Endothelial cell of umbilical vein (primary cell): ENCODE measurements at regions of chr22 and their contacts with region 1.

Region 1: DNA sequence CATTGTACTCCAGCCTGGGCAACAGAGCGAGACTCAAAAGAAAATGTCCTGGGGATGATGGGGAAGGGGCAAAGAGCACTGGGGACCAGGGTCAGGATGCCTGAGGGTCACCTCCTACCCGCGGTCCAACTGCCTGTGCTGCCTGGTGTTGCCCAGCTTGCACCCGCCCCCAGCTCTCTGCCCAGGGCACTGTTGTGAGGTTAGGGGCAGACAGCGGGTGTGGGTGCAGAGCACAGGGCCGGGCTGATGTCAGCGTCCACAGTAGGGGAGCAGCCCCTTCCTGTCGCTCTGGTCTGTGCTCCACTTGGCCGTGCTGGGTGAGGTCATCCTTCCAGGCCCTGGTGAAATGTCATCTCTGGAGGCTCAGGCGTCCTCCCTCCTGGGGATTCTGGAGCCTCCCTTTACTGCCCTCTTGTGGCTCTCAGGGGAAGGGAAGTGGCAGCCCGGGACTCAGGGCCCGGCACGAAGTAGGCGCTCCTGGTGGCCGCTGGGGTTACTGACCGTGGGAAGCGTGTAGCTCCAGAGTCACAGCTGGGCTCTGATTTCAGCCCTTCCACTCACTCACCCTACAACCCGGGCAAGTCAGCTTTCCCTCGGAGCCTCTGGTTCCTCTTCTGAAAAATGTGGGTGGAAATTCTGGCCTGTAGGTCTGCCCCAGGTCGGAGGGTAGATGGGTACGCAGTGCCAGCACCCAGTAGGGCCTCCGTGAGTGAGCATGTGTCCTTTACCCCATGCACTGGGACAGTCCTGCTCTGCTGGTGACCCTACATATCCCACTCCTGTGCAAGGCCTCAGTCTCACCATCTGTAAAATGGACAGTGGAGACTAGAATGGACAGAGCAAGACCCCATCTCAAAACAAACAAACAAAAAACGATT is 17.3 kb upstream of the PRR5 start:
- DNase-seq: peak; percentile 90
- H3K4me3 ChIP-seq: no peak overlapping the region
- H3K27ac ChIP-seq: peak overlapping the region; percentile 7
- H3K4me1 ChIP-seq: peaks cover 7% of the 10 kb centered on the region
- H3K27me3 ChIP-seq: no peaks in the 10 kb centered on the region
- CTCF ChIP-seq: peak; percentile 100
- POLR2A ChIP-seq: no peak

Region 2: GRCh38 chr22:43923631-43924464 is 760.9 kb before region 1 on chr22 and contains the start of gene PNPLA3:
- CTCF ChIA-PET with region 1: no interaction called
- POLR2A ChIA-PET with region 1: no interaction called
- dilution Hi-C with region 1: no loop called
- intact Hi-C with region 1: loop called (anchors 10 kb)
- DNase-seq: peak; percentile 88
- H3K4me3 ChIP-seq: peak within 1 kb of the TSS; percentile 55 to 74 (median 63)
- H3K27ac ChIP-seq: peak within 1 kb of the TSS; percentile 27
- H3K4me1 ChIP-seq: peaks cover 30% of the 10 kb centered on the region
- H3K27me3 ChIP-seq: no peaks in the 10 kb centered on the region
- CTCF ChIP-seq: peak; percentile 29 to 36
- POLR2A ChIP-seq: peak; percentile 47
- total RNA-seq, gene PNPLA3: 12.1 and 12.3 TPM in 2 replicates

Region 3: GRCh38 chr22:44664149-44664548 is 20.6 kb before region 1 on chr22:
- CTCF ChIA-PET with region 1: interaction called, 13 read pairs
- POLR2A ChIA-PET with region 1: interaction called, 8 read pairs
- dilution Hi-C with region 1: no loop called
- intact Hi-C with region 1: loop called (anchors 2 kb)
- DNase-seq: peak; percentile 62
- H3K4me3 ChIP-seq: no peak overlapping the region
- H3K27ac ChIP-seq: no peak overlapping the region
- H3K4me1 ChIP-seq: peaks cover 12% of the 10 kb centered on the region
- H3K27me3 ChIP-seq: no peaks in the 10 kb centered on the region
- CTCF ChIP-seq: no peak
- POLR2A ChIP-seq: no peak

Region 4: DNA sequence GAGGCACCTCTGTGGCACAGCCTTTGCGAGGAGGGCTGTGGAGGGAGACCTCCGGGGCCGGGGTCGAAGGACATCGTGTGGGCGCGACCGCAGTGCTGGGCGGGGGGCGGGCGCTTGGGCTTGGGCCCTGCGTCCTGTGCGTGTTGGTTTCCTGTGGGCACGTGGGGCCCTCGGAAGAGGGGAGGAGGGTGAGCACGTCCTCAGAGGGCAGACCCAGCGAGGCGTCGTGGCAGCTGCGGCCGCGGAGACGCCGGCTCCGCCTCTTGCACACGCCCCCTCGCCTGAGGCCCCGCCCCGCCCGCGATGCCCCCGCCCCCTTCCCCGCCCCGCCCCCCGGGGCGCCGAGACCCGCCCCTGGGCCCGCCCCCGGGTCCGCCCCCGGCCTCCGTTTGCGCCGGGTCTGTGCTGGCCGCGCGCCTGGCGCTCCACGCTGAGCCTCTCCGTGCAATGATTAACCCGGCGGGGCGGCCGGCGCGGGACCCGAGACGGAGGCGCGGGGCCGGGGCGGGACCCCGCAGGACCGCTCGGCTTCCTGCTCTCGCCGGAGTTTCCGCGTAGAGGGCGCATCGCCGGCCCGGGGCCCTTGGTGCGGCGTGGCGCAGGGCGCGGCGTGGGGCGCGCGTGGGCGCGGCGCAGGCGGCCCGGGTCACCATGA is 17.2 kb after region 1 on chr22 and contains the start of gene PRR5:
- CTCF ChIA-PET with region 1: interaction called, 6 read pairs
- POLR2A ChIA-PET with region 1: no interaction called
- dilution Hi-C with region 1: no loop called
- intact Hi-C with region 1: loop called (anchors 1 kb)
- DNase-seq: peak; percentile 63
- H3K4me3 ChIP-seq: peak within 1 kb of the TSS; percentile 16 to 36 (median 32)
- H3K27ac ChIP-seq: no peak within 1 kb of the TSS
- H3K4me1 ChIP-seq: peaks cover 7% of the 10 kb centered on the region
- H3K27me3 ChIP-seq: peaks cover 6 to 11% of the 10 kb centered on the region in 2 experiments
- CTCF ChIP-seq: no peak
- POLR2A ChIP-seq: no peak
- total RNA-seq, gene PRR5: 7.4 and 9.0 TPM in 2 replicates

Region 5: GRCh38 chr22:44735540-44736488 is 51.1 kb after region 1 on chr22:
- CTCF ChIA-PET with region 1: interaction called, 21 read pairs
- POLR2A ChIA-PET with region 1: no interaction called
- dilution Hi-C with region 1: no loop called
- intact Hi-C with region 1: no loop called
- DNase-seq: peak; percentile 36
- H3K4me3 ChIP-seq: no peak overlapping the region
- H3K27ac ChIP-seq: no peak overlapping the region
- H3K4me1 ChIP-seq: no peaks in the 10 kb centered on the region
- H3K27me3 ChIP-seq: no peaks in the 10 kb centered on the region
- CTCF ChIP-seq: peak; percentile 93 to 95
- POLR2A ChIP-seq: no peak

Region 6: DNA sequence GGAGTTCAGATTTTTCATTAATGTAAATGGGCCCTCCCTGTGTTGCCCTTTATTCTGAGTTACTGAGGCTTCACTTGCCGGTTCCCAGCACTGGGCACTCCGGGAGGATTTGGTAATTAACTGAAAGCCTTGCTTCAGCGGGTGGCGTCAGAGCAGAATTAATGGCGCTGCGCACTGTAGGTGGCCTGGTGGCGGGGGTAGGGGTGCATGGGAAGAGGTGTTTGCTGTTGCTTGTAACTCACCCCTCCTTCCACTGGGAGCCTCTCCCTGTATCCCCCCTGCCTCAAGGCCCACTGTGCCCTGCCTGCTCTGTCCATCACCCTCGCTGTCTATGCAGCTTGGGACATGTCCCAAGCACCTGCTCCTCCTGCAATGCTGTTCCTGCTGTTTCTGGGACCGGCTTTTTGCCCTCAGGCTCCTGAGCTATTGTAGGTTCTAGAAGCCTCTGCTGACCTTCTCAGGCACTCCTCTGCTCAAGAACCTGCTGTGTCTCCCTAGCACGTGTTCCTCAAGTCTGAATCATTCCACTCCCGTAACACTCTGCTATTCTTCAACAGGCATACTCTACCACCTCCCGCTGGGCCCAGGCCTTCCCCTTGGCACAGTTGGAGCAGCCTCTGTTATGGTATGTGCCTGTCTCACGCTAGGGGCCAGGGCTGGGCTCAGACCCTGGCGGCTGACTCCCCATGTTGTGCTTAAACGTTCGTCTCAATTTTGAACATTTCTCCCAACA is 92.0 kb after region 1 on chr22:
- CTCF ChIA-PET with region 1: no interaction called
- POLR2A ChIA-PET with region 1: no interaction called
- dilution Hi-C with region 1: no loop called
- intact Hi-C with region 1: no loop called
- DNase-seq: no peak
- H3K4me3 ChIP-seq: no peak overlapping the region
- H3K27ac ChIP-seq: no peak overlapping the region
- H3K4me1 ChIP-seq: no peaks in the 10 kb centered on the region
- H3K27me3 ChIP-seq: no peaks in the 10 kb centered on the region
- CTCF ChIP-seq: no peak
- POLR2A ChIP-seq: no peak